Calu3 (cell line): ENCODE measurements at regions of chr15 and their contacts with region 1.

Region 1: DNA sequence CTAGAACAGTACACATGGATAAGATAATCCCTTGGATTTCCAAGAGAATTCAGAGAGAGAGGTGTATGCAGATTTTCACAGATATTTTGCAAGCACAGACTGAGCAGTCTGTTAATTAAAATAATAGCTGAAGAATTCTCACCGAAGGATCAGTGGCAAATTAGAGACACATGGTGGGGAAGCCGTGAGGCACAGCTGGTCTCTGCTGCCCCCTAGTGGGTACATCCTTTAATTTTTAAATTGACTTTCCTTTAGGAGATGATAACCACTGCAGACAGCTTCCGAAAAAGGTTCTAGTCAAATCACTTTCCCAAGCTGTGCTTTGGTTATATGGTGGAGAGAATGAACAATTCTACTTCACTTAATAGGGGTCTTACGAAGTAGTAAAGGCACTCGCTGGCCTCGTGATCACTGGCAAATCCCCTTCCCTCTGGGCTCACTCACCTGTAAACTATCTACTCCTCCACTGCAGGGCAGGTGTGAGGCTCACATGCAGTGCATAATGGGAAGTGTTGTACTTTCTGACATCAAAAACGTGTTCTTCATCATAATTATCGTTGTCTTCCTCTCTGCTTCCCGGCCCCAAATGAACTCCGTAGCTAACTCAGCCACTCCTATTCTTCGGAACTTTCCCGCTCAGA is 19.5 kb downstream of the MESD start:
- DNase-seq: peak; percentile 84
- H3K4me3 Mint-ChIP-seq: no peak overlapping the region
- H3K27ac Mint-ChIP-seq: peak overlapping the region; percentile 46
- H3K4me1 Mint-ChIP-seq: peaks cover 23% of the 10 kb centered on the region
- H3K27me3 Mint-ChIP-seq: no peaks in the 10 kb centered on the region
- CTCF ChIP-seq: peak; percentile 85

Region 2: DNA sequence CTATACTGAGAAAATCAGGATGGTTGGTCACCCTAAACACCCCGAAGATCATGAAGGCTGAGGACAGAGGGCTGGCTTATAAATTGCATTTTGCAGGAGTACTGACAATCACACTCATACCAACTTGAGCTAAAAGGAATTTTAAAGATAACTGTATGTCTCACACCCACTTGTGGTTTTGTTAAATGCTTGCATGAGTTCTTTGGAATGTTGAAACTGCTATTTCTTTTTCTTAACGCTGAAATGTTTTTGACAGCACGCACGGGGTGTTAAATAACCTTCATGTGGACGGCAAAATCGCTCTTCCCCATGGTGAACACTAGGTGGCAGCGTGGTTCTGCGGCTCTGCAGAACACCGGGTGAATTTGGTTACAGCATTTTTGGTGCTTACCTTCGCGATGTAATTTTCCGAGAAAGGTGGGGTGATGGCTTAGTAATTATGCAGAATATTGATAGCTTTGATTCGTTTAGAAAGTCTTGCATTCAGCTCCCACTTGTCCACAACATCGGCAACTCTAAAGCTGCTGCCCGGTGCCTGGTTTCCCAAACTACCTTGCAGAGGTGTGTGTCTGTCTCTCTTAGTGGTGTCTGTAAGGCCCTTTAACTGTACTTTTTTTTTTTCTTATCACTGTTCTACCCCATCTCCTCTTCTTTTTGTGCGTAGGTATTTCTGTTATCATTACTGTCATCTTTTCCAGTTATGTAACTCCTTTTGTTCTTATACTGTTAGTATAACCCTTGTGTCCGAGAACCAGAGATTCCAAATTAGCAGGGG is 514.3 kb before region 1 on chr15:
- CTCF ChIA-PET with region 1: no interaction called
- intact Hi-C with region 1: loop called (anchors 1 kb)
- DNase-seq: peak; percentile 75
- H3K4me3 Mint-ChIP-seq: peak overlapping the region; percentile 24
- H3K27ac Mint-ChIP-seq: no peak overlapping the region
- H3K4me1 Mint-ChIP-seq: peaks cover 26% of the 10 kb centered on the region
- H3K27me3 Mint-ChIP-seq: peaks cover 9% of the 10 kb centered on the region
- CTCF ChIP-seq: peak; percentile 90

Region 3: DNA sequence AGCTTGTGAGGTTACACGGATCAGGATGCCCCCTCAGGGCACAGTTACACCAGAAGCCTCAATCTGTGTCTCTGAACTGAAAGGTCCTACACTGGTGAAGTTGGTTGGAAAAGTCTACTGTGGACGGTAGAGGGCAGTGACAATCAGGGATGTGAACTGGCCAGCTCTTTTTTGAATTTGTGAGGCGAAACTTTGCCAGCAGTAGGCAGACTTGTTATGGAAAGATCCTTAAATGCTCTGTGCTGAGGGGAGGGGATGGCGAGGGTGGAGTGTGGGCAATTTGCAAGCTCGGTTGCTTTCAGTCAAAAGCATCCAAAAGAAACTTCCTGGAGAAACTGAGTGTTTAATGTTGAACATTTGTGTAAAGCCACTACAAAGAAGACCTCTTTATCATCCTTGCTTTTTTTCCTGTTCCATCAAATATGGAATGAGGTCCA is 402.4 kb before region 1 on chr15:
- CTCF ChIA-PET with region 1: interaction called, 6 read pairs
- intact Hi-C with region 1: loop called (anchors 1 kb)
- DNase-seq: peak; percentile 76
- H3K4me3 Mint-ChIP-seq: no peak overlapping the region
- H3K27ac Mint-ChIP-seq: no peak overlapping the region
- H3K4me1 Mint-ChIP-seq: peaks cover 7% of the 10 kb centered on the region
- H3K27me3 Mint-ChIP-seq: peaks cover 16% of the 10 kb centered on the region
- CTCF ChIP-seq: peak; percentile 75

Region 4: GRCh38 chr15:80585544-80586018 is 384.6 kb before region 1 on chr15:
- CTCF ChIA-PET with region 1: no interaction called
- intact Hi-C with region 1: loop called (anchors 1 kb)
- DNase-seq: peak; percentile 77
- H3K4me3 Mint-ChIP-seq: no peak overlapping the region
- H3K27ac Mint-ChIP-seq: peak overlapping the region; percentile 65
- H3K4me1 Mint-ChIP-seq: peaks cover 57% of the 10 kb centered on the region
- H3K27me3 Mint-ChIP-seq: no peaks in the 10 kb centered on the region
- CTCF ChIP-seq: peak; percentile 50

Region 5: GRCh38 chr15:80798911-80799310 is 171.2 kb before region 1 on chr15:
- CTCF ChIA-PET with region 1: interaction called, 3 read pairs
- intact Hi-C with region 1: loop called (anchors 5 kb)
- DNase-seq: no peak
- H3K4me3 Mint-ChIP-seq: no peak overlapping the region
- H3K27ac Mint-ChIP-seq: no peak overlapping the region
- H3K4me1 Mint-ChIP-seq: peaks cover 12% of the 10 kb centered on the region
- H3K27me3 Mint-ChIP-seq: peaks cover 17% of the 10 kb centered on the region
- CTCF ChIP-seq: no peak

Region 6: GRCh38 chr15:80844011-80844755 is 126.0 kb before region 1 on chr15:
- CTCF ChIA-PET with region 1: interaction called, 5 read pairs
- intact Hi-C with region 1: loop called (anchors 5 kb)
- DNase-seq: peak; percentile 60
- H3K4me3 Mint-ChIP-seq: no peak overlapping the region
- H3K27ac Mint-ChIP-seq: no peak overlapping the region
- H3K4me1 Mint-ChIP-seq: peaks cover 60% of the 10 kb centered on the region
- H3K27me3 Mint-ChIP-seq: no peaks in the 10 kb centered on the region
- CTCF ChIP-seq: no peak

Region 7: DNA sequence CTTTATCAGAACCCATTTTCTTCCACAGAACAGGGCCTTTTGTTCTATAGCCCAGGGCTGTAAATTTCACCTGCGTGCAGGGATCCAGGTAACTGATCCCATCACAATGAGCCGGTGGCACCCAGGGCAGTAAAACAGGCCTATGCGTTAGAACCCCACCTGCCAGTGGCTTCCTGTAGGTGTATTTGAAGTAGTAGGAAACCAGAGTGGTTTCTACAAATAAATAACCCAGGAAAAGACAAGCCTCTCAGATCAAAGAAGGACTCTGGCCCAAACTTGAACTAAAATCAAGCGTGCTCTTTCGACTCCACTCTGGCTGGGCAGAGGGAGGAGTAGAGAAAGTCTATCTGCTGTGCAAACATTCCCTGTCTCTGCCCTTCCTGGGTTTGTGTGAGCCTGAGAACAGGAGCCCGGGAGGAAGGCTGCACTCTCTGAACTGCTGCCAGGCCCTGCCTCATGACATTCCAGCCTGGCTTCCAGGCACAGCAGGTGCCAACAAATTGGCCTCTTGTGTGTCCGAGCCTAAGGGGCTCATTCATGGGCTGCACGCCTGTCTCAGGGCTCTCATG is 113.2 kb before region 1 on chr15:
- CTCF ChIA-PET with region 1: no interaction called
- intact Hi-C with region 1: loop called (anchors 5 kb)
- DNase-seq: peak; percentile 65
- H3K4me3 Mint-ChIP-seq: no peak overlapping the region
- H3K27ac Mint-ChIP-seq: peak overlapping the region; percentile 0
- H3K4me1 Mint-ChIP-seq: peaks cover 40% of the 10 kb centered on the region
- H3K27me3 Mint-ChIP-seq: peaks cover 18% of the 10 kb centered on the region
- CTCF ChIP-seq: no peak

Region 8: DNA sequence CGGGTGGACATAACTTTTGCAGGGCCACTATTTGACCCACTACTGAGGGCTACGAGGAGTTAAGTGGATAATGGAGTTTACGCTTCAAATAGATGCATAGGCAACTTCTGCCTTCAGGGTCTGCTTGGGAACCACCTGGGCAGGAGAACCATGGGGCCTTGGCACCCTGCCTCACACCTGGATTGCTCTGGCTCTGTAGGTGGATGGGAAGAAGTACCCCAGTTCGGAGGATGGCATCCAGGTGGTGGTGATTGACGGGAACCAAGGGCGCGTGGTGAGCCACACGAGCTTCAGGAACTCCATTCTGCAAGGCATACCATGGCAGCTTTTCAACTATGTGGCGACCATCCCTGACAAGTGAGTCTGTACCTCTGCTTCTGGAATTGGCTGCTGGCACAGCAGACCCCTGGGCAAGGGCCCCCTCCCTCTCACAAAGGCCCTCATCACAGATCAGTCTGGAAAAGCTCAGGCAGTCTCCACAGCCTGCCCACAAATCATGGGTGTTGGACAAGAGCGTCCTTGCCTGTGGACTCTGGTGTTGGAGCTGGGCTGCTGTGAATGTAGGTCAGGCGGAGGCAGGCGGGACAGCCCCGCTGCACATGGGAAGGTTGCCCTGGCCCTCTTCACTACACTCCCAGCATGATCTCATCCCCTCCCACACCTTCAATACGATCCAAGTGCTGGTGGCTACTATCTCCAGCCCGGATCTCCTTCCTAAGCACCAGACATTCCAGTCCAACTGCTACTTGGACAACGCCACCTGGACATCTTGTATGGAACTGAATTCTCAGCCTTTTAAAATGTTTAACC is 27.2 kb before region 1 on chr15:
- CTCF ChIA-PET with region 1: no interaction called
- intact Hi-C with region 1: no loop called
- DNase-seq: no peak
- H3K4me3 Mint-ChIP-seq: no peak overlapping the region
- H3K27ac Mint-ChIP-seq: no peak overlapping the region
- H3K4me1 Mint-ChIP-seq: no peaks in the 10 kb centered on the region
- H3K27me3 Mint-ChIP-seq: no peaks in the 10 kb centered on the region
- CTCF ChIP-seq: no peak